ENCODE measurements at regions of chr4 and their contacts with region 1.

Region 1: DNA sequence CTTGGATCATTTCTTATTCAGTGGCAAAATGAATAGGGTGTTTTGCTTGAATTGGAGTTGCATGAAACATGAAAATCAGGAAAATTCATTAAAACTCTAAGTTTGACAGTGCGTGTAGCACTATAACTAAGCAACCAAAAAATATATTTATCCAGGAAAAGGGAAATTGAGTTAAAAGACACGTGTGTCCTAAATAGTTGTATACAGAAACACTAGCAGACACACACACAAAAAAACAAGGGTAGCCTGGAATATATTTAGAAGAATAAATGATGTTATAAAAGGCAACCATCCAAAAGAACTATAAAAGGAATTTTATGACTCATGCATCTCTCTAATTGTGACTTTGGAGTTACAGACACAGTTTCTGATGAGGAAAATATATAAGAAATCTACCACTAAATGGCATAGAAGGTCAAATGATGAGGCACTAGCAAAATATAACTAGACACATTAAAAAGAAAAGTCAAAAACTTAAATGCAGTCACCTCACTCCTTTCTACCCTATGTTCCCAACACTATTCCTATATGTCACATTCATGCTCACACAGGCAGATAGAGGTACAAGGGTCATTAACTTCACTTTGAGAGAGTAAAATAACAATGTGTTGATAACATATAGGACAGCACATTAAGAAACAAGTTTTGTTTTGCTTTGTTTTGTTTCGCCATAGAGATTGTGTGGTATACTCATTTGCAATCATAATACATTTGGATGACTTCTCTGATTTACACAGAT is 793.6 kb upstream of the INTU start:
- DNase-seq: no peak
- ATAC-seq: no peak

Region 2: GRCh38 chr4:126827669-126828068 is 11.4 kb before region 1 on chr4:
- intact Hi-C with region 1: loop called (anchors 1 kb)
- DNase-seq: no peak
- ATAC-seq: no peak